ENCODE measurements at regions of chr1 and their contacts with region 1.

Region 1: GRCh38 chr1:24970399-24970753 is 40.3 kb upstream of the RUNX3 start:
- DNase-seq: peak; percentile 52
- ATAC-seq: peak; percentile 72
- H3K4me3 Mint-ChIP-seq: no peak overlapping the region
- H3K27ac Mint-ChIP-seq: no peak overlapping the region
- H3K4me1 Mint-ChIP-seq: peaks cover 33% of the 10 kb centered on the region
- H3K27me3 Mint-ChIP-seq: peaks cover 3% of the 10 kb centered on the region
- CTCF ChIP-seq: no peak

Region 2: GRCh38 chr1:24919791-24920532 is 50.4 kb before region 1 on chr1:
- CTCF ChIA-PET with region 1: no interaction called
- POLR2A ChIA-PET with region 1: no interaction called
- DNase-seq: no peak
- ATAC-seq: no peak
- H3K4me3 Mint-ChIP-seq: no peak overlapping the region
- H3K27ac Mint-ChIP-seq: no peak overlapping the region
- H3K4me1 Mint-ChIP-seq: peaks cover 8% of the 10 kb centered on the region
- H3K27me3 Mint-ChIP-seq: peaks cover 10% of the 10 kb centered on the region
- CTCF ChIP-seq: no peak

Region 3: DNA sequence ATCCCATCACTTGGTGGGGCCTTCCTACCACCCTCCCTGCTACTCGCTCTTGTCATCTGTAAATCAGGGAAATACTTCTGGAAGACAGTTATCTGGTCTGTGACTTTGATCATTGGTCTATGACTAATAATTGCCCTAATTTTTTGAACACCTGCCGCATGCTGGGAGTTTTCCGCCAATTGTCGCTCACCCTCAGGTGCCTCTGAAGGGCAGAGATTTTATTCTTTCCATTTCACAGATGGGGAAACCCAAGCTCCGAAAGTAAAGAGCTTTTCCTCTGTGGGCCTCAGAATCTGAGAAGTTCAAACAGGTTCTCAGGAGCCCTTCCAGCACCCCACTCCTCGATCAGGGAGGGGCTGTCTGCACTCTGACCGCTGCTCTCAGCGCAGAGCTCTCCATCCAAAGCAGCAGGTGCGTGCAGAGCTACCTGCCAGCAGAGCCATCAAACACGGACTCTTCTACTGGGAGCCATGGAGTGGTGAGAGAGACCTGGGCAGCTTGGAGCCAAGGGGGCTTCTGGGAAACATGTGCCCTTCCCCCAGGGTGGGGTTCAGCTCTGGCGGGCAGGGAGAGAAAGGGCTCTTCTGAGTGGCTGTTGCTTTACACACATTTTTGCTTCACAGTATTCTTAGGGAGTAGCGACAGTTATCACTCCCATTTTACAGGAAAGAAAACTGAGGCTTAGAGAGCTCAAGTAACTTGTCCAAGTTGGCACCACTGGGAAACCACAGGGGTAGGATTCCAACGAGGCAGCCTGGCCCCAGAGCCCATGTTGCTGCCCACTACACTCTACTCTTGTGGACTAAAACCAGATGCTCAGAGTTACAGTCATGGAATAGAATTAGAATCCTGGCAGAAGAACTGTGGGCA is 34.5 kb before region 1 on chr1:
- CTCF ChIA-PET with region 1: interaction called, 23 read pairs
- POLR2A ChIA-PET with region 1: no interaction called
- DNase-seq: no peak
- ATAC-seq: no peak
- H3K4me3 Mint-ChIP-seq: no peak overlapping the region
- H3K27ac Mint-ChIP-seq: no peak overlapping the region
- H3K4me1 Mint-ChIP-seq: peaks cover 51% of the 10 kb centered on the region
- H3K27me3 Mint-ChIP-seq: peaks cover 53% of the 10 kb centered on the region
- CTCF ChIP-seq: no peak

Region 4: DNA sequence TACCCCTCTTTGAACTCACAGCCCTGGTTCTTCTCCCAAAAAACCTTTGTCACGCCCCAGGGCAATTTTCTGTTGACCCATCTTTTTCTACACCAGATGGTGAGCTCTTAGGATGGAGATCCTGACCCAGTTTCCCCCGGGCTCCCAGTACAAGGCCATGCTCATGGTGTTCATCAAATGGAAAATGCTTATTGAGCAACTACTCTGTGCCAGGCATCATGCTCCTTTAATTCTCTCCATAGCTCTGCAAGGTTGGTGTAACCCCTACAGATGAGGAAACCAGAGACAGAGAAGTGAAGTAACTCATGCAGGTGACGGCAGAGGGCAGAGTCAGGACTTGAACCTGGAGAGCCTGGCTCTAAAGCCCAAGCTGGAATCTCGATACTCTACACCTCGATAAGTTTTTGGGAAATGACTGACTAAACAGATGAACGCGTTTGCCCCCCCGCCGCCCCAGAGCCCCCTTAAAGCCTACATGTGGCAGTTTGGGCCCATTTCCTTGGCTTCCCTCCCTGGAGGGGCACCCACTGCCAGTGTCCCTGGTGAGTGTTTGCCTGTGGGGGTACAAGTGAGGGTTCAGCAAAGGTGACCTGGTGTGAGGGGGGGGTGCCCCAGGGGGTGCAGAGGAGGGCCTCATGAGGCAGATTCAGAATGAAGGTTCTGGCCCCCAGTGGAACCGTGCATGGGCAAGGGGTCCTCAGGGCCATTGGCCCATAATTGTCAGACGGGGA is 10.1 kb before region 1 on chr1:
- CTCF ChIA-PET with region 1: interaction called, 13 read pairs
- POLR2A ChIA-PET with region 1: no interaction called
- DNase-seq: no peak
- ATAC-seq: no peak
- H3K4me3 Mint-ChIP-seq: no peak overlapping the region
- H3K27ac Mint-ChIP-seq: no peak overlapping the region
- H3K4me1 Mint-ChIP-seq: 0 out of 2 replicates have a peak, but pooled peaks cover 3% of the 10 kb centered on the region
- H3K27me3 Mint-ChIP-seq: peaks cover 3% of the 10 kb centered on the region; the same call in 1 of the 2 replicates
- CTCF ChIP-seq: no peak